ENCODE measurements at regions of chr22 and their contacts with region 1.

Region 1: GRCh38 chr22:27816552-27816951 is 15.0 kb upstream of the MN1 start:
- DNase-seq: no peak
- ATAC-seq: no peak
- H3K4me3 ChIP-seq: no peak overlapping the region
- H3K27ac ChIP-seq: no peak overlapping the region
- H3K4me1 ChIP-seq: no peaks in the 10 kb centered on the region
- H3K27me3 ChIP-seq: no peaks in the 10 kb centered on the region
- CTCF ChIP-seq: no peak
- EP300 ChIP-seq: no peak
- POLR2A ChIP-seq: no peak
- RAD21 ChIP-seq: no peak

Region 2: DNA sequence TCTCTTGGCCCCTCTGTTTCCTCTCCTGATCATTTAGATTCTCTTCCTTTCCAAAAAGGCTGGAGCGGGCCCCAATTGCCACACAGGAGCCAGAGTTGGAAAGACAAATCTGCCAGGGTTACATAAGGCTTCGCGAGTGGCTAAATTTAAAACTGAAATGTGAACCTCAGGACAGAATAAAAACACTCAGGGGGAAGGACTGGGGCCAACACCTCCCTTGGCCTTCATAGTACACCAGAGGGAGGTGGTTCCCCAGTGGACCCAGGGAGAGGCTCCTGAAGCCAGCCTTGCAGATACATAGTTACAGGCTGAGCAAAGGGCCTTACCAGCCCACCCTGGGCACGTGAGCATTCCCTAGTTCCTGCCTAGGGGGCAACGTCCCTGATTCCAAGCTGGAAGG is 165.1 kb before region 1 on chr22:
- CTCF ChIA-PET with region 1: no interaction called
- POLR2A ChIA-PET with region 1: no interaction called
- RAD21 ChIA-PET with region 1: no interaction called
- SMC1A ChIA-PET with region 1: no interaction called
- in situ Hi-C with region 1: no loop called
- intact Hi-C with region 1: no loop called
- DNase-seq: no peak
- ATAC-seq: no peak
- H3K4me3 ChIP-seq: no peak overlapping the region
- H3K27ac ChIP-seq: no peak overlapping the region
- H3K4me1 ChIP-seq: no peaks in the 10 kb centered on the region
- H3K27me3 ChIP-seq: no peaks in the 10 kb centered on the region
- CTCF ChIP-seq: no peak
- EP300 ChIP-seq: no peak
- POLR2A ChIP-seq: no peak
- RAD21 ChIP-seq: no peak

Region 3: DNA sequence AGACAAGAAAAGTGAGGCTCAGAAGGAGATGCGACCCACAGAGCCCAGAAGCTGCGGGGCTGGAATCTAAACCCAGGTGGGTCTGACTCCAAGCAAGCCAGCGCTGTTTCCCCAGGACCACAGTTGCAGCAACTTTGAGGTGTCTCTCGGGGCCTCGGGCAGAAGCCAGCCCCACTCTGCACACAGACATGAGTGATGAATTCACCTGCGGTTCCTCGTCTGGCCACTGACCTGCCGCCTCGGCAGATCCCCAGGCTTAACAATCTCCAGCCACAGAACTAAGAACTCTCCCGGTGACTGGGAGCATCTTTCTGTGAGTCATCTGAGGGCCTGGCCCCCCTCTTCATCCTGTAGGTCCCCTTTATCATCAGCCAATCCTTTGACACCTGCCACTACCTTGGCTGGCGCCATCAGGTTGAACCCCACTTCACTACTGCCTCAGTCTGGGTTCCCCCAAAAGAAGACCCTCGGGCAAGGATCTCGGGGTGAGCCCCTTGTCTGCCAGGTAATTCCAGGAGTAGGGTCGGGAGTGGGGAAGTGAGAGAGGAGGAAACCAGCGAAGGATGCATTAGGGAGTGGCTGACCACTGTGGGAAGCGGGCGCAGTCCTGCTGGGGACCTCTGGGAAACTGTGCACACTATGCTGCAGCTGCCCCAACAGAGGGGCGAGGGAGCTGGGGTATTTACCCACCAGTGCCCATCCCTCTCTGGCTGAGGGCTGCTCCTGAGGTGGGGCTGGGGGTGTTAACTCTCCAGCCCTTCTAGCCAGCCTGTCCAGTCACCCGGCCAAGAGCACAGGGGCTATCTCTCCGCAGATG is 18.0 kb after region 1 on chr22:
- CTCF ChIA-PET with region 1: no interaction called
- POLR2A ChIA-PET with region 1: interaction called, 13 read pairs
- RAD21 ChIA-PET with region 1: no interaction called
- SMC1A ChIA-PET with region 1: interaction called, 3 read pairs
- in situ Hi-C with region 1: no loop called
- intact Hi-C with region 1: no loop called
- DNase-seq: no peak
- ATAC-seq: no peak
- H3K4me3 ChIP-seq: no peak overlapping the region
- H3K27ac ChIP-seq: no peak overlapping the region
- H3K4me1 ChIP-seq: no peaks in the 10 kb centered on the region
- H3K27me3 ChIP-seq: no peaks in the 10 kb centered on the region
- CTCF ChIP-seq: no peak
- EP300 ChIP-seq: no peak
- POLR2A ChIP-seq: no peak
- RAD21 ChIP-seq: no peak

Region 4: DNA sequence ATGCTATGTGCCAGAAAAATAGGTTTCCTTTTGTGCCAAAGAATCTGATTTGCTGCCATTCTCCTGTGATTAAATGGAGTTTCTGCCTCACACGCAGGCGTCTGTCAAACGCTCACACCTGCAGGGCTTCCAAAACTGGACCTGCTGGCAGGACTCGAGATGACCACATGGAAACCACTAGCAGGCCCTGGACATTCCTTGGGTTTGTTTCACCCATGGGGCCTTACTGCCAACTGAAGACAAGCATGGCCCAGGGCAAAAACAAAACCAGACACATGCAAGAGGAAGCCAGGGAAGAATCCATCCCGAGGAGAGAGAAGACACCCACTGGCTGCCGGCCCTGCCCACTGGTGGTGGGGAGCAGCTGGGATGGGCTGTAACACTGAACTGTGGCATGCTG is 40.9 kb after region 1 on chr22:
- CTCF ChIA-PET with region 1: no interaction called
- POLR2A ChIA-PET with region 1: no interaction called
- RAD21 ChIA-PET with region 1: no interaction called
- SMC1A ChIA-PET with region 1: no interaction called
- in situ Hi-C with region 1: no loop called
- intact Hi-C with region 1: no loop called
- DNase-seq: no peak
- ATAC-seq: no peak
- H3K4me3 ChIP-seq: no peak overlapping the region
- H3K27ac ChIP-seq: no peak overlapping the region
- H3K4me1 ChIP-seq: no peaks in the 10 kb centered on the region
- H3K27me3 ChIP-seq: no peaks in the 10 kb centered on the region
- CTCF ChIP-seq: no peak
- EP300 ChIP-seq: no peak
- POLR2A ChIP-seq: no peak
- RAD21 ChIP-seq: no peak